ENCODE measurements at regions of chr14 and their contacts with region 1.

Region 1: DNA sequence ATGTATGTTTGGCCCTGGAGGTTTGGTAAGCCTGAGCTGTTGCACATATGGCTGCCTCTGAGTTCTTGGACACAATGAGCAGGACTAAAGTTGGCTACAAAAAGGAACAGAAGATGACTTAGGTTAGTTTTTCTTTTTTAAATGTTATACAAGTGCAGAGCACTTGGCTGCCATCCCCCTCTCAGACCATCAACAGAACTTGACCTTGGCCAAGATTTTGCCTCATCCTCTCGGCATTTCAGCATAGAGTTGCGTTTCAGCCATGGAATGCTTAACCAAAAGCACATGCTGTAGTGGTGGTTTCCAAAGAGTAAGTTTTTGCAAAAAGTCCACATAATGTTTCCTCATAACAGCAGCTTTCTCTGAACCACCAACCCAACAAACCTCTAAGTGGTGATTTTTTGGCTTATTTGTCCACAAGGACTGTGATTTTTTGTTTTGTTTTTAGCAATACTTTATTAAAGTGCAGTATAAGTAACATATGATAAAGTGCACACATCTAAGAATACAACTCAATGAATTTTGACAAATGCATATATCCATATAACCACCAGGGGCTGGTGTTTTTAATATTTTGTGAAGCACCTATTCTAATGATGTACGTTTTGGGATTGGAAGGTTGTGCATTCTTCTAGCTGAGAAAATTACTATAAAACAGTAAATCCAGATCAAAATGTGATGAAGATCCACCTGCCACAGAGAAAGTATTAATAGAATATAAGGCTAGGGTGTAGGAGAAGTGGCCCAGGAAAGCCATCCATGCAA is 12.1 kb upstream of the GALNT16 start:
- DNase-seq: peak; percentile 94
- ATAC-seq: peak; percentile 92
- H3K4me3 ChIP-seq: no peak overlapping the region
- H3K27ac ChIP-seq: peak overlapping the region; percentile 23; the same call in 1 of the 2 replicates
- H3K4me1 ChIP-seq: peaks cover 3% of the 10 kb centered on the region; the same call in 1 of the 2 replicates
- H3K27me3 ChIP-seq: peaks cover 9% of the 10 kb centered on the region
- CTCF ChIP-seq: peak; percentile 36
- POLR2A ChIP-seq: no peak
- RAD21 ChIP-seq: peak; percentile 2; the same call in 1 of the 2 replicates

Region 2: DNA sequence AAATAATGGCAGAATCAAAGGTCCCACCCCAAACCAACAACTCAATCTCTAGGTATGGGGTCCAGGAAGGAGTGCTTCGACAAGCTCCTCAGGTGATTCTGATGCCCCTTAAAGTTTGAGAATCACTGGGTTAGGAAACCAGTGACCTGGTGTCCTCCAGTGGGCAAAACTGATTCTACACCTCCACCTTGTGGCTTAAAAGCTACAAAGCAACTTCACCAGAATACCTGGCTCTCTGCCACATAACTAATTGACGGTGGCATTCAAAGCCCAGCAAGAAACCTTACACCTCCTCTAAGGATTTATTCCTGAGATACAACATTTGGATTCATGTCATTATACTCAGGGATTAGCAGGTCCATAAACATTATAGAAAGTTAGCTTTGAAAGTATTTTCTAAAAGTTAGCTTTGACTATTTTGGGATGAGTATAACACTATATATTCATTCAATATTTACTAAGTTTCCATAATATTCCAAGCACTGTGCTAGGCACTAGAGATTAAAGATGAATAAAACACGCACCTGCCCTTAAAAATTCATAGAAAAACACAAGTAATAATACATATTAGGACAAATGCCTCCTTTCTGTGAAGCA is 140.4 kb before region 1 on chr14:
- CTCF ChIA-PET with region 1: no interaction called
- POLR2A ChIA-PET with region 1: no interaction called
- dilution Hi-C with region 1: no loop called
- in situ Hi-C with region 1: no loop called
- intact Hi-C with region 1: no loop called
- DNase-seq: peak; percentile 71
- ATAC-seq: peak; percentile 67
- H3K4me3 ChIP-seq: no peak overlapping the region
- H3K27ac ChIP-seq: no peak overlapping the region
- H3K4me1 ChIP-seq: 0 out of 2 replicates have a peak, but pooled peaks cover 2% of the 10 kb centered on the region
- H3K27me3 ChIP-seq: no peaks in the 10 kb centered on the region
- CTCF ChIP-seq: peak; percentile 84
- POLR2A ChIP-seq: no peak
- RAD21 ChIP-seq: peak; percentile 94

Region 3: DNA sequence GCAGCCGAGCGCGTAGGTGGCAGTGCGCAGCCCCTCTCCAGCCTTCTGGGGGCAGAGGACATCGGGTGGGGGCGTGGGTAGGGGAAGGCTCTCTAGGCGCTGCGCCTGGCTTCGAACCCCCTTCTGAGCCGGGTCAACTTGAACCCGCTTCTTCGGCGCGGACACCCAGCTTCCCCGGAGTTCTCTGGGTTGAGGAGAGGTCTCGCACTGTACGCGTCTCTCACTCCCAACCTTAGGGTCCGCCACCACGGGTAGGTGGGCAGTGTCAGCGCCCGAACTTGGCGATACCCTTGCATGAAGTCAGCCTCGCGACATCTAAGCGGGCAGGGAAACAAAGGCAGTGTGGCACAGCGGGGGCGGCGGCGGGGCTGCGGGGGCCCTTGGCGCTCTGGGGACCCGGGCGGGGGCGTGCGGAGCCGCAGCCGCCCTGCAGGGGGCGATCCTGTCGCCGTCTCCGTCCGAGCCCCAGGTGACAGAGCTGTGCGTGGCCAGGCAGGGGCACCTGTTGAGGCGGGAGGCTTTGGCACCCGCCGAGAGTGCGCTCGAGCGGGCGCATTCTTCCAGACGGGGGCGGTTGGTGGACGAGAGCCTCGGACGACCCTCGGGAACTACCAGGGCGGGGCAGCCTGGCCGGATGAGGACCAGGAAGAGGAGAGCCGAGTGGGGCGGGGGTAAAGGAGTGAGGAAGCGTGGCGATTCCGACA is 13.2 kb after region 1 on chr14:
- CTCF ChIA-PET with region 1: interaction called, 6 read pairs
- POLR2A ChIA-PET with region 1: no interaction called
- dilution Hi-C with region 1: no loop called
- in situ Hi-C with region 1: no loop called
- intact Hi-C with region 1: loop called (anchors 1 kb)
- DNase-seq: no peak
- ATAC-seq: no peak; the same call in 1 of the 2 replicates
- H3K4me3 ChIP-seq: peak overlapping the region; percentile 2; the same call in 1 of the 2 replicates
- H3K27ac ChIP-seq: no peak overlapping the region
- H3K4me1 ChIP-seq: peaks cover 2% of the 10 kb centered on the region; the same call in 1 of the 2 replicates
- H3K27me3 ChIP-seq: peaks cover 60% of the 10 kb centered on the region
- CTCF ChIP-seq: peak; percentile 42
- POLR2A ChIP-seq: no peak
- RAD21 ChIP-seq: peak; percentile 31

Region 4: GRCh38 chr14:69288011-69288771 is 40.3 kb after region 1 on chr14:
- CTCF ChIA-PET with region 1: interaction called, 4 read pairs
- POLR2A ChIA-PET with region 1: no interaction called
- dilution Hi-C with region 1: no loop called
- in situ Hi-C with region 1: no loop called
- intact Hi-C with region 1: loop called (anchors 5 kb)
- DNase-seq: peak; percentile 42
- ATAC-seq: peak; percentile 85
- H3K4me3 ChIP-seq: no peak overlapping the region
- H3K27ac ChIP-seq: no peak overlapping the region
- H3K4me1 ChIP-seq: no peaks in the 10 kb centered on the region; the same call in 1 of the 2 replicates
- H3K27me3 ChIP-seq: peaks cover 22% of the 10 kb centered on the region
- CTCF ChIP-seq: peak; percentile 43
- POLR2A ChIP-seq: no peak
- RAD21 ChIP-seq: peak; percentile 44

Region 5: DNA sequence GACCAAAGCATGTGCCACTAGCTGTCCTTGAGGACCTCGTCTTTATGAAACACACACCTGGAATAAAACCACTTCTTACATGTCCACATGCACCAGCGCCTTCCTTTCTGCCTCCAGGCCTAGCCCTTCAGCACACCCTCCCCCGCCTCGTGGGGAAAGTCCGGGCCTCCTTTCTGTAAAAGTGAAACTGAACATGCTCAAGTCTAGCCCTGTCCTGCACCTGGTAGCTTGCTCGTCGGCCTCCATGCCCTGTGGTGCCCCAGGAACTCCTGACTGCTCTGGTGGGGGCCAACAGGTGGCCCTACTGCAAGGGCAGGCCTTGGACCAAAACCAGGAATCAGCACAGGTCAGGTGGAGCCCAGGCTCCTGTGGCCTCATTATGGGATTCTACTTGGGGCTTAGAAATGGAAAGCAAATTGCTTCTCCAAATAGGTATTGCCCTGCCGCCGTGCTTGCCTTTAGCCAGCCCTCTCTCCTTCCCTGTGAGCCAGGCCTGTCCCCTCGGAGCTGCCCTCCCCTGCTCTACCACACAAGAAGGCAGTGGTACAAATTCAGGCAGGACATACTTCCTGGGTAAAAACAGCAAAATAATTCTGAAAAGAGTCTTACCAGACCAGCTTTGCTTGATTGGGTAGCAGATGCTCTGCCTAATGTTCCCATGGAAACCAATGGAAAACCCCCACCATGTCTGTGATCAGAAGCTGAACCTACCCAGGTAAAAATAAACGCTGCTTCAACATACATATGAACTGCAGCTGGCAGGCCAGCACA is 106.7 kb after region 1 on chr14:
- CTCF ChIA-PET with region 1: no interaction called
- POLR2A ChIA-PET with region 1: no interaction called
- dilution Hi-C with region 1: no loop called
- in situ Hi-C with region 1: loop called (anchors 5 kb)
- intact Hi-C with region 1: no loop called
- DNase-seq: peak; percentile 5
- ATAC-seq: no peak
- H3K4me3 ChIP-seq: no peak overlapping the region
- H3K27ac ChIP-seq: no peak overlapping the region
- H3K4me1 ChIP-seq: peaks cover 7% of the 10 kb centered on the region
- H3K27me3 ChIP-seq: peaks cover 19% of the 10 kb centered on the region
- CTCF ChIP-seq: no peak
- POLR2A ChIP-seq: no peak
- RAD21 ChIP-seq: no peak

Region 6: DNA sequence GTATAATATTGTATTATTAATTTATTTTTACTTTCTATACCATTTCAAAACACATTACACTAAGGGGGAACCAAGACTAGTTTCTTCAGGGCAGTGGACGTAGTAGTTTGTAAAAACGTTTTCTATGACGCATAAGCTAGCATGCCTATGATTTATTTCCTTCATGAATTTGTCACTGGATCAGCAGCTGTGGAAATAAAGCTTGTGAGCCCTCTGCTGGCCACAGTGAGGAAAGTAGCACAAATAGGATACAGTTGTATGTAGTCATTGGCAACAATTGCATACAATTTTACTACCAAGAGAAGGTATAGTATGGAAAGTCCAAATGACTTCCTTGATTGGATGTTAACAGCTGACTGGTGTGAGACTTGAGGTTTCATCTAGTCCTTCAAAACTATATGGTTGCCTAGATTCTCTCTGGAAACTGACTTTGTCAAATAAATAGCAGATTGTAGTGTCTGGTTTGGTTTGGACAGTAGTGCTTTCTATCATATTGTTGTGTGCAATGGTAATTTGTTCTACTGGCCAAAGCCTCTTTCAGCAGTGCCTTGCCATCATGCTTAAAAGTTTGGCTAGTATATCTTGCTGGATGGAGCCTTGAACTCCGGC is 212.3 kb after region 1 on chr14:
- CTCF ChIA-PET with region 1: interaction called, 6 read pairs
- POLR2A ChIA-PET with region 1: no interaction called
- dilution Hi-C with region 1: no loop called
- in situ Hi-C with region 1: loop called (anchors 5 kb)
- intact Hi-C with region 1: no loop called
- DNase-seq: peak; percentile 95
- ATAC-seq: peak; percentile 75
- H3K4me3 ChIP-seq: no peak overlapping the region
- H3K27ac ChIP-seq: no peak overlapping the region
- H3K4me1 ChIP-seq: 0 out of 2 replicates have a peak, but pooled peaks cover 2% of the 10 kb centered on the region
- H3K27me3 ChIP-seq: no peaks in the 10 kb centered on the region
- CTCF ChIP-seq: peak; percentile 86
- POLR2A ChIP-seq: no peak
- RAD21 ChIP-seq: peak; percentile 84